ENCODE measurements at regions of chr4 and their contacts with region 1.

Region 1: GRCh38 chr4:54064295-54065111 is at the start of gene CHIC2:
- DNase-seq: peak; percentile 94
- ATAC-seq: peak; percentile 72
- H3K4me3 ChIP-seq: peak within 1 kb of the TSS; percentile 82
- H3K27ac ChIP-seq: peak within 1 kb of the TSS; percentile 43
- H3K4me1 ChIP-seq: peaks cover 64% of the 10 kb centered on the region
- H3K27me3 ChIP-seq: no peaks in the 10 kb centered on the region
- CTCF ChIP-seq: no peak
- total RNA-seq, gene CHIC2: 52.3 and 58.1 TPM in 2 replicates

Region 2: GRCh38 chr4:53196882-53197771 is 867.4 kb before region 1 on chr4:
- CTCF ChIA-PET with region 1: no interaction called
- POLR2A ChIA-PET with region 1: no interaction called
- intact Hi-C with region 1: loop called (anchors 10 kb)
- DNase-seq: peak; percentile 89
- ATAC-seq: peak; percentile 71
- H3K4me3 ChIP-seq: no peak overlapping the region
- H3K27ac ChIP-seq: no peak overlapping the region
- H3K4me1 ChIP-seq: no peaks in the 10 kb centered on the region
- H3K27me3 ChIP-seq: no peaks in the 10 kb centered on the region
- CTCF ChIP-seq: peak; percentile 95

Region 3: DNA sequence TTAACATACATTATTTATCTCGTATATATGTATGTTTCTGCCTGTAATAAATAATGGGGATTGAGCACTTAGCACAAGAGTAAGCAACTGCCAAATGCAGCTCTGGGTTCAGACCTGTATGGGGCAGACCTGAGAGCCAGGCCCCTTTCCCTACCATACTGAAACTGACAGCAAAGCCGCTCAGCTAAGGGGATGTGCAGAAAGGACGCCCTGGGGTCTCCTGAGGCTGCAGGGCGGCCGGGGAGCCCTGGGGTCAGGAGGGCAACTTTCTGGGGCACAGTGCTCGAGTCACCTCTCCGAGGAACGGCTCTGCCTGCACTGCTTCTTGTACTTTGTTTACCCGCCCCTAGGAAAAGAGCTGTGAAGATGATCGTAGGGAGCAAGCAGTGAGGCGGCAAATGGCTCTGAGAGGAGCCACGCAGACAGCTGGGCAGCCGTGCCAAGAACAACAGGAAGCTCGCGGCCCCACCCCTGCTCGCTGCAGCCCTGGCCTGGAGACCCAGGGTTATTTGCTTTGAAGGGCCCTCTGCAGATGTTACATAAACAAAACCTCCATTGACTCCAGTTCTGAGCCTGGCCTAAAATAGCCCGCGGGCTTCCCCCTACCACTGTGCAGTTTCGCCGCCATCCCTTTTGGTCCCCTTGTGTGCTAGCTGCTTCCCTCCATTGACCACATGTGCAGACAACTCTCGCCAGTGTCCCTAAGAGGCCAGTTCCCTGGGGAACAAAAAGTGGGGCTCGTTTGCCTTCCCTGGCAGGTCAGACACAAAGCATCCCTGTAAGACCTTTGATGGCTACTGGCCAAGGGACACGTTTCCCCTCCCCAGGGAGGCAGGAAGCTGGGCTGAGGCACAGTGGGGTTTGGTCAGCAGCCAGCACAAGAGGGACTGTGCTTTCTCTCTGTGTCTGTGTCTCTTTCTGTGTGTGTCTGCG is 361.9 kb before region 1 on chr4:
- CTCF ChIA-PET with region 1: no interaction called
- POLR2A ChIA-PET with region 1: no interaction called
- intact Hi-C with region 1: loop called (anchors 10 kb)
- DNase-seq: peak; percentile 86
- ATAC-seq: peak; percentile 88
- H3K4me3 ChIP-seq: peak overlapping the region; percentile 63
- H3K27ac ChIP-seq: peak overlapping the region; percentile 88
- H3K4me1 ChIP-seq: peaks cover 34% of the 10 kb centered on the region
- H3K27me3 ChIP-seq: no peaks in the 10 kb centered on the region
- CTCF ChIP-seq: 0 out of 2 replicates have a peak, but pooled peaks have one; percentile 15

Region 4: DNA sequence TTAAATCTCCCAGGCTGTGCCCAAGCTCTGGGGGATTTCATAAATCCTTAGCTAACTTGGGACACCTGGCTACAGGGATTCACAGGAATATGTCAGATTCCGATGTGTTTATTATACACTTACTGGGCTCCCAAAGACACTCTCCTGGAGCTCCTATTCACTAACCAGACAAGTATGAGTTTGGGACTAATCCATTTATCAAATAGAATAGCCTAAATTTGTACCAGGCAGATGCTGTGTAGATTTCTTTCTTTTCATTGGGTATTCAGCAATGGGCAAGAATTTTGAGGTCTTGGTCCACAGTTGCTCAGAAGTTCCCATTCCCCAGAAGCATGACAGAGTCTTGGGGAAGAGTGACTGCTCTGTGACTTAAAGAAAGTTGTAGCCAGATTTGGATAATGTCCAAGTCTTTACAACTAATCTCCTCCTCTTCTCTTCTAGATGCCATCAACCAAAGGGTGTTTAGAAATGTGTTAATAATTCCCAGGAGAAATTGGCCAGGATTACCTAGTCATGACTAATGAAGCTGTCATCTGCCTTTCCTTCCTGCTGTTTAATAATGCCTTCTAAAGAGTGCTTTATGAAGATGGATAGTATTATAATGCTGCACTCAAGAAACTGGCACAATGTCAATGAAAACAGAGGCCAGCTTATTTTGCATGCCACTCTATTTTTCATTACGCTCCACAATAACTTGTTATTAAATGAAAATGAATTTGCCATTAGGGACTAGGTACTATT is 121.0 kb before region 1 on chr4:
- CTCF ChIA-PET with region 1: no interaction called
- POLR2A ChIA-PET with region 1: no interaction called
- intact Hi-C with region 1: loop called (anchors 1 kb)
- DNase-seq: peak; percentile 97
- ATAC-seq: peak; percentile 94
- H3K4me3 ChIP-seq: peak overlapping the region; percentile 33; the same call in 1 of the 2 replicates
- H3K27ac ChIP-seq: peak overlapping the region; percentile 85
- H3K4me1 ChIP-seq: peaks cover 22% of the 10 kb centered on the region
- H3K27me3 ChIP-seq: no peaks in the 10 kb centered on the region
- CTCF ChIP-seq: no peak

Region 5: GRCh38 chr4:54082168-54082567 is 17.7 kb after region 1 on chr4:
- CTCF ChIA-PET with region 1: interaction called, 9 read pairs
- POLR2A ChIA-PET with region 1: interaction called, 17 read pairs
- intact Hi-C with region 1: loop called (anchors 1 kb)
- DNase-seq: peak; percentile 100
- ATAC-seq: peak; percentile 86
- H3K4me3 ChIP-seq: peak overlapping the region; percentile 24; the same call in 1 of the 2 replicates
- H3K27ac ChIP-seq: peak overlapping the region; percentile 67
- H3K4me1 ChIP-seq: peaks cover 55% of the 10 kb centered on the region
- H3K27me3 ChIP-seq: no peaks in the 10 kb centered on the region
- CTCF ChIP-seq: no peak

Region 6: GRCh38 chr4:54144199-54144598 is 79.7 kb after region 1 on chr4:
- CTCF ChIA-PET with region 1: no interaction called
- POLR2A ChIA-PET with region 1: no interaction called
- intact Hi-C with region 1: loop called (anchors 2 kb)
- DNase-seq: no peak
- ATAC-seq: no peak
- H3K4me3 ChIP-seq: no peak overlapping the region
- H3K27ac ChIP-seq: peak overlapping the region; percentile 39; the same call in 1 of the 2 replicates
- H3K4me1 ChIP-seq: peaks cover 12% of the 10 kb centered on the region
- H3K27me3 ChIP-seq: no peaks in the 10 kb centered on the region
- CTCF ChIP-seq: no peak